Posterior vena cava (tissue), 2 donors: ENCODE measurements at regions of chr15 and their contacts with region 1.

Region 1: GRCh38 chr15:70488002-70488605 is 275.3 kb downstream of the UACA start:
- DNase-seq: peak; percentile 89

Region 2: DNA sequence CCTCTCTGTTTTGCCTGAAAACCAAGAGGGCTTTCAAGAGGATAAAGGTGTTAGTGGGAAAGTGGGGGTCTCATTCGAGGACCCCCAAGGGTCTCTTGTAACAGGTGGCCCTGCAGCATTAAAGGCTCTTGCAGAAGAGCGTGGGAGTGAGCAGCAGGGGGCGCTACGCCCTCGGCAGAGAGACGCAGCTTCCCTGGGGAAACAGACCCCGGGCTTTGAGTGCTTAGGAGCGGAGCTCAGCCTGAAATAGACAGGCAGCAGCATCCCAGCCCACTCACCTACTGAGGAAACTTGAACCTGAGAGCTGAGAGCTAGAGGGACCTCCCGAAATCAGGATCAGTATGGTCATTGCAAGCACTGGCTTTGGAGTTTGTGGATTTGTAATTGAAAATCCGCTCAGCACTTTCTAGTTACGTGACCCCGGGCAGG is 1009.8 kb before region 1 on chr15:
- intact Hi-C with region 1: loop called (anchors 2 to 10 kb)
- DNase-seq: no peak

Region 3: GRCh38 chr15:69489073-69489571 is 999.0 kb before region 1 on chr15:
- intact Hi-C with region 1: loop called in 1 of 2 experiments (anchors 10 kb)
- DNase-seq: no peak

Region 4: DNA sequence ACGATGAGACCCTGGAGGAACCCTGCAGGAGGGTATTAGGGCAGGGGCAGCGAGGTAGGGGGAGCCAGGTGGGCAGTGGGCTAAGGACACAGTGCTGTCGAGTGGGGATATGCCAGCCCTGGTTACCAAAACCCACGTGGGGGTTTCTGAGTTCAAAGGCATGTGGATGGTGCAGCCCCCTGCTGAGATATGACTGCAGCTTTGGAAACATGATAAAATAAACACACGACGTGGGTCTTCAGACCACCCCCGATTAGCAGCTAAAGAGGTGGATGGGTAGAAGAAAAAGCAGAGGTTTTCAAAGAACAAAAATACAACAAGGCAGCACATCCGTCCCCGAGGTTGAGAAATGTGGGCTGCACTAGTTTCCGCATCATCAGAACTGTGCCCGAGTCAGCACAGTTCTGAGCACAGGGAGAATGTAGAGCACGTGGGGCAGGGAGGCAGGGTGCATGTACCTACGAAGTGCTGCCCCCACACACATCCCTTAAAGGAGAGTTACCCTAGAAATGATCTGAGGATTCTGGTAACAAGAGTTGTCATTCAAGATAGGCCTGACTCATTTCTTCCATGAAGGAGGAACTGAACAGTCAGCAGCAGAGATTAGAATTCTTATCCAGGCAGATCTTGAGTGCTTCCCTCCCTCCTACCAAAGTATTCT is 914.2 kb before region 1 on chr15:
- intact Hi-C with region 1: loop called in 1 of 2 experiments (anchors 5 kb)
- DNase-seq: peak; percentile 55

Region 5: GRCh38 chr15:69729161-69729748 is 758.8 kb before region 1 on chr15:
- intact Hi-C with region 1: loop called (anchors 1 to 10 kb)
- DNase-seq: no peak

Region 6: GRCh38 chr15:70362886-70363285 is 125.2 kb before region 1 on chr15:
- intact Hi-C with region 1: no loop called
- DNase-seq: peak; percentile 77

Region 7: DNA sequence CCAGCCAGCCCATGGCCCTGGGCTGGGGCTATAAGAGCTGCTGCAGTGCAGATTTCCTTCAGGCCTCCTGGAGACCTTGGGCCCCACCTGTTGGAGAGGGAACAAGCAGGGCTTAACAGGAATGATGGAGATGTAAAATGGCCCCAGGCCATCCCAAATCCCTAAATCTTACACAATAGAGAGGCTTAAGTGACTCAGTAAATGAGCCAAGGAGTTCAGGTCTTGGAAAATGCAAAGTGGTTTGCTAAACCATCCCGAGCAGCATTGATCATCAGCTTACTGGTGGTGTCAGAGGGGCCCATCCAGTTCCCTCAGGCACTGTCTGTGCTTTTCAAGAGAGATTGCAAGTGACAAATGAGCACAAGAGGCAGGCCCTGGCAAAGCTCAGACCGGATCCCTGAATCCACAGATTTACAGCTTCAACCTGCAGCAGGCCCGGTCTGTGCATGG is 50.2 kb before region 1 on chr15:
- intact Hi-C with region 1: no loop called
- DNase-seq: no peak

Region 8: GRCh38 chr15:70875001-70875782 is 387.1 kb after region 1 on chr15:
- intact Hi-C with region 1: no loop called
- DNase-seq: no peak

Region 9: DNA sequence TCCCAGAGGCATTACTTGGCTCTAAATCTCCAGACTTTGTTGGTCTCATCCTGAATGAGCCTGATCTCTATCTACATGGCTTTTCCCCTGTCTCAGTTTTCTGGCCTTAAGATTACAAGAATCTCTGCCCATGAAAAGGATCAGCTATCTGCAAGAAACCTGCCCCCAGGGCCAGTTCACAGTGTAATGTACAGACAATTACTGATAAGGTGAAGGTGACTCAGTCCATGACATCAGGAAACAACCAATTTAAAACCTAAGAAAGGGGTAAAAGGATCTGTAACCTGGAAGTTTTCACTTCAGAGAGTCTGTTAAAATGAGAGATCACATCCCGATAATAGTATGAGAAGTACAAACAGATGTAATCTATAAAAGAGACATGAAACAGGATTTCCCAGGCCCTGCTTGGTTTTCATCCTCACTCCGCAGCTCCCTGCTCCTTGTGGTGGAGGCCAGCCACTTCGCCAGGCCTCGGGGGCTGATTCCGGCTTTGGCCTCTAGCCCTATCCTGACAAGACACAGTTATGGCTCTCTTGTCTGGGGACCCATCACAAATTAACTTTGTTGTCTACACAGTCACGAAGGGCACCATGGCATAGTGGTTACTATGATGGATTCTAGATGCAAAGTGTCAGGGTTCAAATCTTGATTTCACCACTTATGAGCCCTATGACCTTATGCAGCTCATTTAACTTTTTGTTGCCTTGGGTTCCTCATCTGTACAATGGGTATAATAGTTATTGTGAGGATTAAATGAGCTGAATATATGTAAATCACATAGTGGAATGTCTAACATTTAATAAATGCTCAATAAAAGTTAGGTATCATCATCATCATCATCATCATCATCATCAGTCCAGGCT is 764.2 kb after region 1 on chr15:
- intact Hi-C with region 1: no loop called
- DNase-seq: no peak